ENCODE measurements at regions of chr1 and their contacts with region 1.

Region 1: DNA sequence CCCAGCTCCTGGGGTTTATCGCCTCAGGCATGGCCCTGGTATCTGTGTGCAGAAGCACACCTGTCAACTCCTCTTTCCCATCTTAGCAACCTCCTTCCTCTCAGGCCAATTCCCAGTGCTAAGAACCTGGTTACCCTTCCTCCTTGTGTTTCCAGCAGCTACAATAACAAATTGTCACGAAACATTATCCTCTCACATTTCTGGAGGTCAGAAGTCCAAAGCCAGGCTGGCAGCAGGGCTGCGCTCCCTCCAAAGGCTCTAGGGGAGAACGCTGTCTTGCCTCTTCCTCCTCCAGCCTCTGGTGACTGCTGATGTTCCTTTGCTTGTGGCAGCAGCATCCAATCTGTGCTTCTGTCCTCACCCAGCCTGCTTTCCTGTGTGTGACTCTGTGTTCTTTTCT is 10.7 kb upstream of the MRPS14 start:
- DNase-seq: no peak
- ATAC-seq: no peak
- H3K4me3 Mint-ChIP-seq: no peak overlapping the region
- H3K27ac Mint-ChIP-seq: no peak overlapping the region
- H3K4me1 Mint-ChIP-seq: peaks cover 6% of the 10 kb centered on the region
- H3K27me3 Mint-ChIP-seq: peaks cover 3% of the 10 kb centered on the region

Region 2: GRCh38 chr1:175023043-175023921 is 10.7 kb before region 1 on chr1 and contains the start of gene MRPS14:
- POLR2A ChIA-PET with region 1: no interaction called
- DNase-seq: peak; percentile 96
- ATAC-seq: peak; percentile 95
- H3K4me3 Mint-ChIP-seq: peak within 1 kb of the TSS; percentile 93
- H3K27ac Mint-ChIP-seq: peak within 1 kb of the TSS; percentile 93
- H3K4me1 Mint-ChIP-seq: peaks cover 25% of the 10 kb centered on the region
- H3K27me3 Mint-ChIP-seq: no peaks in the 10 kb centered on the region
- total RNA-seq, gene MRPS14: 34.0 to 38.4 TPM

Region 3: GRCh38 chr1:175089136-175089718 is 55.3 kb after region 1 on chr1:
- POLR2A ChIA-PET with region 1: no interaction called
- DNase-seq: no peak
- ATAC-seq: no peak
- H3K4me3 Mint-ChIP-seq: no peak overlapping the region
- H3K27ac Mint-ChIP-seq: no peak overlapping the region
- H3K4me1 Mint-ChIP-seq: no peaks in the 10 kb centered on the region
- H3K27me3 Mint-ChIP-seq: peaks cover 7% of the 10 kb centered on the region

Region 4: DNA sequence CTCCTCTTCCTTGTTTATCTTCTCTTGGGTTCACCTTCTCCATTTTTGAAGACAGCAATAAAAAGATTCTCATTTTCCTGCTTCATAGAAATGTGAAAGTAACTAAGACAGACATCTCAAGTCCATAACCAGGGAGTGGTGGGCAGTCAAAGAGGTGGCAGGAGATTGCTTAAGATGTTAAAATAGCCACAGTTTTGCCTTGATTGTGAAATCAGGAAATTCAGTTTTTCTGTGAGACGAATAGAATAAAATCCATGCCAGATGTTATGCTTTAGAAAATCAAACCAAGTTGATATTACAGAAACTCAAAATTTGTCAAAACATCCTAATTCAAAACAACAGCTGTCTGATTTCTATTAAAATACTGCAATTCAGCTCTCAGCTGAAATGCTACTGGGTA is 90.9 kb after region 1 on chr1:
- POLR2A ChIA-PET with region 1: interaction called, 12 read pairs
- DNase-seq: no peak
- ATAC-seq: no peak
- H3K4me3 Mint-ChIP-seq: no peak overlapping the region
- H3K27ac Mint-ChIP-seq: no peak overlapping the region
- H3K4me1 Mint-ChIP-seq: peaks cover 3% of the 10 kb centered on the region
- H3K27me3 Mint-ChIP-seq: peaks cover 3% of the 10 kb centered on the region